Panc1 (cell line): ENCODE measurements at regions of chr3 and their contacts with region 1.

Region 1: GRCh38 chr3:100756441-100756840 is 47.1 kb downstream of the TFG start:
- DNase-seq: no peak
- ATAC-seq: no peak
- H3K4me3 ChIP-seq: no peak overlapping the region
- H3K27ac ChIP-seq: no peak overlapping the region
- H3K4me1 ChIP-seq: no peaks in the 10 kb centered on the region
- H3K27me3 ChIP-seq: no peaks in the 10 kb centered on the region
- CTCF ChIP-seq: no peak

Region 2: DNA sequence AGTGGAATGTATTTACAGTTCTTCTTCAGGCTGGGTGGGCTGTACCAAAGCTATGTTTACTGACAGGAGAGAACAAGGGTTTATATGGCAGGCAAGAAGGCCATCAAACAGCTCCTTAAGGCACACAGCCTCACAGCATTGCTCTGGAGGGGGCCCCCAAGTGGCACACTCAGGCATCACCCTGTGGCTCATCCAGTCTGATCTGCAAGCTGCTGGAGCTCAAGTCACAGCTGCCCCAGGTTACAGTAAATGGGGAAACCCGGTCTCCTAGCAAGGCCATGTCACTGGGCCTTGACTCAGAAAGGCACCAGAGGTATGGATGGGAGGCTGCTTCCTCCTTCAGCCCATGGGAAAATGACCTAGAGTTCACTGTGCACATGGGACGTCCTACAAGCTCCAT is 20.3 kb after region 1 on chr3:
- CTCF ChIA-PET with region 1: no interaction called
- POLR2A ChIA-PET with region 1: no interaction called
- in situ Hi-C with region 1: no loop called
- intact Hi-C with region 1: no loop called
- DNase-seq: no peak
- ATAC-seq: no peak
- H3K4me3 ChIP-seq: no peak overlapping the region
- H3K27ac ChIP-seq: no peak overlapping the region
- H3K4me1 ChIP-seq: no peaks in the 10 kb centered on the region
- H3K27me3 ChIP-seq: no peaks in the 10 kb centered on the region
- CTCF ChIP-seq: no peak

Region 3: GRCh38 chr3:100844063-100844936 is 87.9 kb after region 1 on chr3:
- CTCF ChIA-PET with region 1: no interaction called
- POLR2A ChIA-PET with region 1: no interaction called
- in situ Hi-C with region 1: no loop called
- intact Hi-C with region 1: no loop called
- DNase-seq: no peak
- ATAC-seq: no peak
- H3K4me3 ChIP-seq: no peak overlapping the region
- H3K27ac ChIP-seq: no peak overlapping the region
- H3K4me1 ChIP-seq: no peaks in the 10 kb centered on the region
- H3K27me3 ChIP-seq: peaks cover 2% of the 10 kb centered on the region; the same call in 1 of the 2 replicates
- CTCF ChIP-seq: no peak

Region 4: DNA sequence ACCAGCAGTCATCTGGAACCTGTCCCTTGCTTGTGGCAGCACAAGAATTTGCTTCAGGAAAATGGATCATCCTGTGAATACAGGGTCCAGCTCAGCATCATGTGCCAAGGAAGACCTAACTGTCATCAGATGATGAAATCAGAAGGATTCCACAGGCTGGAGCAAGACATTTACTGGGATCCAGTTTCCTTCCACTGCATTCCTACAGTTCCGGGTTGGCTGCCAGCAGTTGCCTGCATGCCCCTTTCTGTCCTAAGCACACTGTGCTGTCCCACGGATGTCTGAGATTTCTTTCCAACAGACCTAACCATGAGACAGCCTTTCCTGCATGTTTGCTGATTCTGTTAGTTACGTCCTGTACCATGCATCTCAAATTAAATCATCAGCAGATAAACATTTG is 423.2 kb after region 1 on chr3:
- CTCF ChIA-PET with region 1: no interaction called
- POLR2A ChIA-PET with region 1: no interaction called
- in situ Hi-C with region 1: no loop called
- intact Hi-C with region 1: loop called (anchors 10 kb)
- DNase-seq: no peak
- ATAC-seq: no peak
- H3K4me3 ChIP-seq: no peak overlapping the region
- H3K27ac ChIP-seq: no peak overlapping the region
- H3K4me1 ChIP-seq: no peaks in the 10 kb centered on the region
- H3K27me3 ChIP-seq: no peaks in the 10 kb centered on the region; the same call in 1 of the 2 replicates
- CTCF ChIP-seq: no peak